ENCODE measurements at regions of chr12 and their contacts with region 1.

Region 1: DNA sequence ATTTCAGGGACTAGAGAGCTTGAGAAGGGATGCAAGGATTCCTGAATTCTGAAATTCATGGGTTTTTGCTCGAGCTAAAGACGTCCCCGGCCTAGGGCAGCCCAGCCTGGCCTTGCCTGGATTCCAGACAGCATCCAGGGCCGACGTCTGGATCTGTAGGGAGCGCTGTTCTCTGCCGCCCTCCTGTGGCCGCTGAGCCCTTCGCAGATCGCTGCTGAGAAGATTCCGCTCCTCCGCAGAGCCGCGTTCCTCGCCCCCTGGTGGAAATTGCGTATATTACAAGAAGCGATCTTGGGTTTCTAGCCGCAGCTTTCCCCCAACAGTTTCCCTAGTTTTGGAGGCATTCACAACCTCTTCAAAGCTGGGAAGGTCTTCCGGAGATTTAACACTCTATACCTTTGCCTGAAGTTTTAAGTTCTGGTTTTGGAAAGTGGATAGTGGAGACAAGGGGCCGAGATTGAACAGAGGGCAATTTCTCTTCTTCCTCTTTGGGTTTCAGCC is 5.1 kb downstream of the CISTR start:
- DNase-seq: peak; percentile 93
- ATAC-seq: peak; percentile 89

Region 2: DNA sequence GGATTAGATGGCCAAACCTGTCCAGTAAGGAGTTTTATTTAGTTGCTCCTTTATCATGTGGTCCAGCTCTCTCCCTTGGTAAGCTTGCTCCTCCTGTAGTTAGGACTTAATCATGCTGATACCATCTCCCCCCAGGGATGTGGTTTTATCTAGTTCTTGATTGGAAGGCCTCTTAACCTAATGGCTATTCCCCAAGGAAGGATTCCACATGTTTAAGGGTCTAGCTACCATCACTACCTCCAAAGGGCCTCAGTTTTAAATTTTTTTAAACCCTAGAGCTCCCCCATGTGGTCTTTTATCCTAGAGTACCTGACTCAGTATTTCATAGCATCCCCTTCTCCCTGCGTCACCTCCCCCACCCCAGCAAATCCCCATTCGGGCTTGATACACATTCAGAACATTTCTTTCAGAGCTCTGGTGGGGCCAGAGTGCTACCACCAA is 269.9 kb before region 1 on chr12:
- intact Hi-C with region 1: no loop called
- DNase-seq: no peak
- ATAC-seq: peak in 1 of 2 donors; percentile 7

Region 3: DNA sequence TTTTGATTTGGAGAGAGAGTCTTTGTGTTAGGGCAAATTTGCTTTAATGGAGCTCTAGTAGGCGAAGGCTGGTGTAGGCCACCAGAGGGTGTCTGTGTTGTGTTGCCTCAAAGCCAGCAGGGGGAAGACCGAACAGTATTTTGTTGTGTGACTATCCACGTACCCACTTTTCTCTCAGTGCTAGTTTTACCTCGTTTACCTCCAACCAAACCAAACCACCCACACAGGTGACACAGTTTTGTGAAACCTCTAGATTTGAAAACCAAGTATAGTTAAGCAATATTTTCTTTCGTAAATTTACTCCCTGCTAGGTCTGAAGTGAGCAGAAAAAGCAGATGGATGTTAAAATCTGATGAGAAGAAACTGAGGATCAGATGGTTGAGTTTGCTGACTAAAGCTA is 203.1 kb before region 1 on chr12:
- intact Hi-C with region 1: loop called in 1 of 2 experiments (anchors 5 kb)
- DNase-seq: peak; percentile 61
- ATAC-seq: peak; percentile 93 to 96

Region 4: GRCh38 chr12:53625946-53626701 is 120.5 kb before region 1 on chr12 and contains the start of gene ATF7:
- intact Hi-C with region 1: no loop called
- DNase-seq: peak; percentile 97
- ATAC-seq: peak; percentile 98 to 99
- total RNA-seq, gene ATF7: 30.1 to 34.7 TPM

Region 5: DNA sequence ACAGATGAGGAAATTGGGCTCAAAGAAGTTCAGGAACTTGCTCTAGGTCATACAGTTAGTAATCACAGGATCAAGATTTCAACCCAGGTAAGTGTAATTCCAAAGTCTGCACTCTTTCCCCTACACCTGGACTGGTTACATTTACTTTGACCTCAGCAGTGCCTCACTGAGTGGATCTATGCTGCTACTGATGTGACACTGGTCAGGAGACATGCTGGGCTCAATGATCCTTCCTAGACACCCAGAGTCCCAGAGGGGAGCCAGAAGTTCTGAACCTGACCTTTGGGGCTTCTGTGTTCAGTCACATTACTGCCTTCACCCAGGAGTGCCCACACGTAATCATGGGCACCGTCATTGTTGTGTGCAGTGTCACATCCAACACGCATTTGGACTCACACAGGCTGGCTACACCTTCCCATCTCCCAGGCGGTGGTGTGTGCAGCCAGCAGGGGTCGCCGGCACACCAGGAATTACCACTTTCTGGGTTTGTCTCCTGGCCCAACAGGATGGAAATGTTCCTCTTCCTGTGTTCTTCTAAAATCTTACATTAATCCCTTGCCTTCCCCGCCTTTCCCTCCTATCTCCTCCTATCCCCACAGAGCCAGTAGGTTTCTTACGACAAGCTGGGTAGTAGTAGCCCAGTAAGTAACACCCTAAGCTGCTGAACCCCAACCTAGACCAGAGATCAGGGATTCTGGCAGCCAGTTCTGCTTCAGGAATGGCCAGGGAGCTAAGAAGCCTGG is 45.0 kb before region 1 on chr12:
- intact Hi-C with region 1: loop called (anchors 1 to 2 kb)
- DNase-seq: peak; percentile 86
- ATAC-seq: peak; percentile 94 to 95